ENCODE measurements at regions of chr10 and their contacts with region 1.

Region 1: DNA sequence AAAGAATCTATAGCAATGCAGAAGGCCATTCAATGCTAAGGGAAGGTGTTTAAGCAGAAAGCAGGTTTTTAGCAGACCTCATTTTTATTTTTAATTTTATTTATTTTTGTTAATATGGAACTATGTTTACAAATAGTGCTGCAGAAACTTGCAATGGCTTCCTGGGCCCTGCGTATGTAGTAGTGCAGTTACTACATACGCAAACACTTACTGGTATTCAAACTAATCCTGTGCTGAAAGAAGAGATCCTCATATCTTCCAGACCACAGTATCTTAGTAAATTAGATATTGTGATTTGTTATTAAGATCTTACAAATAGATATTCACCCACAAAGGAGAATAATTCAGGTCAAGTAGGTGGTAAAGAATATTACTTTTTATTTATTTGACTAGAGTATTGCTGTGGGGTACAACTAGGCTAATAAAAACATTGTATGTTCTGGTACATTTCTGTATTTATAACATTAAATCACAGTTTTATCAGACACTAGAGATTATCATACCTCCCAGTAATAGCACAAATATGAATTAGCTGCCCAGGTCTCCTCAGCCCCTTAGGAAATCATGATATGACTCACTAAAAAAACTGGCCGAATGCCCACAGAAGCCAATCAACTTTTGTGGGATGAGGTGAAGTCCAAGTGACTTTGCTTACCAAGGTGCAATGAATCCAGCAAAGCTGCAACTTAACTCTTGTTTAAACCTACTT is 57.6 kb downstream of the RNLS start:
- DNase-seq: no peak
- ATAC-seq: no peak
- H3K4me3 ChIP-seq: no peak overlapping the region
- H3K27ac ChIP-seq: no peak overlapping the region
- H3K4me1 ChIP-seq: peaks cover 0 to 2% of the 10 kb centered on the region in 2 donors
- H3K27me3 ChIP-seq: no peaks in the 10 kb centered on the region

Region 2: GRCh38 chr10:88064608-88065382 is 460.7 kb before region 1 on chr10:
- intact Hi-C with region 1: no loop called
- DNase-seq: peak in 1 of 2 donors; percentile 70
- ATAC-seq: peak; percentile 36
- H3K4me3 ChIP-seq: no peak overlapping the region
- H3K27ac ChIP-seq: no peak overlapping the region
- H3K4me1 ChIP-seq: peaks cover 0 to 4% of the 10 kb centered on the region in 2 donors
- H3K27me3 ChIP-seq: no peaks in the 10 kb centered on the region

Region 3: DNA sequence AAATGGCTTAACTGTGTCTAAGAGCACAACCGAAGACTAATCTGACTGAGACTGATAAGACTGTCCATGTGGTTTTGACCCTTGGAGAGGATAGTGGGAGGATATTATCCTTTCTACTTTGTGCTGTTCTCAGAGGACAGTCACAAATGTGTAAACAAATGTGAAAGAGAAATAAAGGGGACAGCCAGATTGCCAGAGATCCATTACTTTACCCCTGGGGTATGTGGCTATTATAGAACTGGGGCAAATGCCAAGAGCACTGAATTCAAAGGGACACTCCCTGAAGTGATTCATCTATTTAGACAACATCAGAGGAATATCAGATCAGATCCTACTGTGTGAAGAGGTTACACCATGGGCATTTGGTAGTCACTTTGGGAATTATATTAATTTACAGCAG is 97.1 kb before region 1 on chr10:
- intact Hi-C with region 1: loop called in 1 of 2 experiments (anchors 10 kb)
- DNase-seq: no peak
- ATAC-seq: no peak
- H3K4me3 ChIP-seq: no peak overlapping the region
- H3K27ac ChIP-seq: no peak overlapping the region
- H3K4me1 ChIP-seq: peaks cover 0 to 1% of the 10 kb centered on the region in 2 donors
- H3K27me3 ChIP-seq: no peaks in the 10 kb centered on the region

Region 4: DNA sequence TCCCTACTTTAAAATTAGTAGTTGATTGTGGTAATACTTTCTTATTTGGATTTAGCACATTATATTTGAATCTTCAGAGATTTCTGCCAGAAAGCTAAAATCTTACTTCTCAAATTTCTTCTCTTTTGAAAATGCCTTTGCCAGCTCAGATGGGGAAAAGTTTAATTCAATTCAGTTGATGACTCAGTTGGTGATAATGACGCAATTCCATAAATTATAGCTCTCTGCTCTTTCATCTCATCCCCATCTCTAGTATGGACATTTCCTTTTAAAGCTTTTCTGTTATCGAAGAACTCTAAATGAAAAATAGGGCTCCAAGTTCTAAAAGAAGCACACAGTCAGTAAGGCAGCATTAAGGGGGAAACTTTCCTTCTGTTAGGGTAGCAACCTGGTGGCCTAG is 32.1 kb after region 1 on chr10:
- intact Hi-C with region 1: no loop called
- DNase-seq: no peak
- ATAC-seq: no peak
- H3K4me3 ChIP-seq: no peak overlapping the region
- H3K27ac ChIP-seq: no peak overlapping the region
- H3K4me1 ChIP-seq: peaks cover 0 to 2% of the 10 kb centered on the region in 2 donors
- H3K27me3 ChIP-seq: no peaks in the 10 kb centered on the region

Region 5: DNA sequence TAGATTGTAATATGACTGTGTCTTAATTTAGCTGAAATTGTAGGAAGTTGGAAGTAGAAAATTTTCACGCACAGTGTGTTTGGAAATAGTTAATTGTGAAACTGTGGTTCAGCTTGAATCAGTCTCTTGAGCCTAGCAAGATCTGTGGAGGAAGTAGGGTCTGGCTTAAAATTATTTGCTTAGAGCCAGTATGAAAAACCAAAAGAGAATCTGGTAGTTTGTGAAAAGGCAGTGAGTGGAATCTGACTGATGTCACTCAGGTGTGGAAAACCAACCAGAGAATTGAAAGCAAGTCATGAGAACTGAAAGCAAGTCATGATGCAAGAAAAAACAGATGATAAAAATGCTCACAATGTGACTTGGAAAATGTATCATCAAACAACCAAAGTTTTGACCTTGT is 72.5 kb after region 1 on chr10:
- intact Hi-C with region 1: no loop called
- DNase-seq: no peak
- ATAC-seq: no peak
- H3K4me3 ChIP-seq: no peak overlapping the region
- H3K27ac ChIP-seq: no peak overlapping the region
- H3K4me1 ChIP-seq: no peaks in the 10 kb centered on the region
- H3K27me3 ChIP-seq: no peaks in the 10 kb centered on the region

Region 6: GRCh38 chr10:88616251-88616977 is 90.9 kb after region 1 on chr10:
- intact Hi-C with region 1: no loop called
- DNase-seq: peak in 1 of 2 donors; percentile 35
- ATAC-seq: no peak
- H3K4me3 ChIP-seq: no peak overlapping the region
- H3K27ac ChIP-seq: no peak overlapping the region
- H3K4me1 ChIP-seq: no peaks in the 10 kb centered on the region
- H3K27me3 ChIP-seq: no peaks in the 10 kb centered on the region